ENCODE measurements at regions of chr18 and their contacts with region 1.

Region 1: DNA sequence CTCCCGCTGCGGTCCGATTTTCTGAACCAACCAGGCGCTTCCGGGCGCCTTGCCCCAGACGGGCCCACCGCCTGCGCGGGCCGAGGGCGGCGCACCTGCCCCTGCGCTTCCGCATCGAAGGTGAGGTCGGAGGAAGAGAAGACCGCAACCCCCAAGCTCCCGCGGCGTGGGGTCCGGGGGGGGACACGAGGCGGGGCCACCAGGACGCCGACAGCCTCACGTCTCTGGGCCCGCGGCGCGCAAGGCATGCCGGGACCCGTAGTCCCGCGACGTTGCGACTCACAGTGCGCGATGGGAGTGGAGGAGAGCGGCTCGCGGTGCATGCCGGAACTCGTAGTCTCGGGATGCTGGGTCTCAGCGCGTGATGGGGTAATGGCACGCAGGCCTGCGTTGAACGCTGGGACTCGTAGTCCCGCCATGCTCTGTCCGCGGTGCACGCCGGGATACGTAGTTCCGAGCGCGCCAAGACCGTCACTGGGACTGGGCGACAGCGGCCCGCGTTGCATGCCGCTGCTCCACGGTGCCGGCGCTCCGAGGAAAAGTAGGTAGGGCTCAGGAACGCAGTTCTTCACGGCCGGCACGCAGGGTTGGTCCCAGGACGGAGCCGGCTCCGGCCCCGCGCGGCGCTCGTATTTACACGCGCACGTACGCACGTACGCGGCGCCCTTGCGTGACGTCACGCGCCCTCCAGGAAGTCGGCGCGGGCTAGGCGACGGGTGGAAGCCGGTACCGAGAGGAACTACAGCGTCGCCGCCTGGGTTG is at the start of gene CTDP1:
- DNase-seq: peak; percentile 97 to 99 (median 98)
- H3K4me3 ChIP-seq: peak within 1 kb of the TSS; percentile 59
- H3K27ac ChIP-seq: peak within 1 kb of the TSS; percentile 94 to 99
- H3K4me1 ChIP-seq: peaks cover 12% of the 10 kb centered on the region
- H3K27me3 ChIP-seq: no peaks in the 10 kb centered on the region
- CTCF ChIP-seq: no peak
- EP300 ChIP-seq: no peak
- POLR2A ChIP-seq: peak; percentile 30
- total RNA-seq, gene CTDP1: 9.3 to 15.2 (median 13.7) TPM

Region 2: GRCh38 chr18:79424008-79424565 is 255.2 kb before region 1 on chr18:
- intact Hi-C with region 1: loop called in 1 of 4 experiments (anchors 1 kb)
- DNase-seq: peak; percentile 84 to 93 (median 87)
- H3K4me3 ChIP-seq: no peak overlapping the region
- H3K27ac ChIP-seq: peak overlapping the region in 1 of 2 donors; percentile 53
- H3K4me1 ChIP-seq: peaks cover 13% of the 10 kb centered on the region
- H3K27me3 ChIP-seq: no peaks in the 10 kb centered on the region
- CTCF ChIP-seq: no peak
- EP300 ChIP-seq: no peak
- POLR2A ChIP-seq: no peak

Measured in ovary (tissue), 10 donors.